ENCODE measurements at regions of chr1 and their contacts with region 1.

Region 1: DNA sequence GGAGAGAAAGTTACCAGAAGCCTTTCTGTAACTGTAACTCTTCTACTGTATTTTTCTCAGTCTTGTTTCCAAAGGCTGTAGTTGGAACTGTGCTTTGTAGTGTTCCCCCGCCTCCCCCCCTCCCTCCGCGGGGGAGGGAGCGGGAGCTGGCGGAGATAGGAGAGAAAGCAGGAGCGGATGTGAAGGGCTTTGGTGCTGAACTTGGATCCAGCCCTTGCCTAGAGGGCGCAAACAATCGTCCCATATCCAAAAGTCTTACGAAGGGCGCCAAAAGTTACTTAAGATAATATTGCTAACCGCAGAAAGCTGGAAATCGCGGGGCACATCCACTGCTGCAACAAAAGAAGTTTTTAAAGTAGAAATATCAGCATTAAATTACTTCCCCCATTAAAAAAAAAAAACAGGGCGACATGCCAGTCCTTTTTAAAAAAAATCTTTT is 2.4 kb upstream of the NFIA start:
- DNase-seq: peak; percentile 78 to 81 (median 81)
- ATAC-seq: peak; percentile 34
- H3K4me3 ChIP-seq: no peak overlapping the region
- H3K4me1 ChIP-seq: peaks cover 30% of the 10 kb centered on the region
- CTCF ChIP-seq: no peak

Region 2: DNA sequence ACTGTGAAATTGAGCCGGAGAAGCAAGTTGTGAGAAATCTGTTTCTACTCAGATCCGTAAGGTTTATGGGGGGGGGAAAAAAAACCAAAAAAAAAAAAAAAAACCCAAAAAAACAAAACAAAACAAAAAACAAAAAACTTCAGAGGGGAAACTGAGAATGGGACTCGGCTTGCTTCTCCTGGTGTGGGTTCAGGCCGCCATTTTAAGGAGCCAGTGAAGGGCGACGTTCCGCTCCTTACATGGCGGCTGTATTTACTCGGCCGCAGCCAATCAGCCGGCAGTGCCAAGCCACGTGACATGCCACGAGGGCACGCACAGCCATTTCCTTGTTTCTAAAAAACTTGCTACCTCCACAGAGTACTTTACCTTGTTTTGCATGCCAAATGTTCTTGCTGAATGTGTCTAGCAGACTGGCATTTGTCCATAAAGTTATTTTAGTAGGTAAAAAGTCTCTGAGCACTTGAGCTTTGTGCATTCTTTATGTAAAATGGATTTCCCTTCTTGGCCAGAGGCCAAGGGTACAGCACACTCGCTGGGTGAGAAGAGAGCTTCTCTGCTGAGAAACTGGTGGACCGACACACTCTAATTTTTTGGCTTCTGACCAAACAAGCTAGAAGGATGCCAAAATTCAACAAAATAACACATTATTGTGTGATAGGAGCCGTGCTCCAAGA is 104.3 kb after region 1 on chr1:
- intact Hi-C with region 1: loop called in 1 of 2 experiments (anchors 10 kb)
- DNase-seq: peak; percentile 86 to 94 (median 88)
- ATAC-seq: peak; percentile 94
- H3K4me3 ChIP-seq: no peak overlapping the region
- H3K4me1 ChIP-seq: no peaks in the 10 kb centered on the region
- CTCF ChIP-seq: no peak

Measured in mucosa of descending colon (tissue), 3 donors.